Calu3 (cell line): ENCODE measurements at regions of chr2 and their contacts with region 1.

Region 1: GRCh38 chr2:120174963-120175581 is 48.1 kb downstream of the TMEM185B start:
- DNase-seq: peak; percentile 32
- H3K4me3 Mint-ChIP-seq: no peak overlapping the region
- H3K27ac Mint-ChIP-seq: no peak overlapping the region
- H3K4me1 Mint-ChIP-seq: no peaks in the 10 kb centered on the region
- H3K27me3 Mint-ChIP-seq: no peaks in the 10 kb centered on the region
- CTCF ChIP-seq: peak; percentile 60

Region 2: GRCh38 chr2:119641562-119642258 is 533.4 kb before region 1 on chr2:
- CTCF ChIA-PET with region 1: interaction called, 6 read pairs
- intact Hi-C with region 1: loop called (anchors 2 kb)
- DNase-seq: peak; percentile 79
- H3K4me3 Mint-ChIP-seq: no peak overlapping the region
- H3K27ac Mint-ChIP-seq: no peak overlapping the region
- H3K4me1 Mint-ChIP-seq: peaks cover 30% of the 10 kb centered on the region
- H3K27me3 Mint-ChIP-seq: no peaks in the 10 kb centered on the region
- CTCF ChIP-seq: peak; percentile 86

Region 3: DNA sequence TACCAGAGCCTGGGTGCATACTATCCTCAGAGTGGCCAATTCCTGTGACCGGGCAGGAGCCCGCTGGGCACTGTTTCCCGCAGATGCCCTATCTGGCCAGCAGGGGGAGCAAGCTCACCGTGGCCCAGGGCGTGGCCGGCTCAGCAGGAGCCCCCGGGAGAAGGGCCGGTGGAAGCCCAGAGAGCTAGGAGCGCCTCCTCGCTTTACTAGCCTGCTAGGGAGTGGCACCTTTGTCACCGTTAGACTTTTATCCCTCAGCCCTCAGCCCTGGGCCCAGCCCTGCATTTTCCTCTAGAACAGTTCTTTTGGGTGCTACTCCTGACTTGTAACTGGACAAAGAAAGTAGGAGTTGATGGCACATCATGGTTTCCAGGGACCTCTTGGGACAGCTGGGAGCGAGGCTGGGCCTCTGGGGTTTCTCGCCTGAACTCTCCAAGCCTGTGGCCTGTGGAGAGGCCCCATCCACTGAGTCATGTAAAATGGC is 472.1 kb before region 1 on chr2:
- CTCF ChIA-PET with region 1: interaction called, 8 read pairs
- intact Hi-C with region 1: loop called (anchors 1 kb)
- DNase-seq: peak; percentile 83
- H3K4me3 Mint-ChIP-seq: no peak overlapping the region
- H3K27ac Mint-ChIP-seq: no peak overlapping the region
- H3K4me1 Mint-ChIP-seq: no peaks in the 10 kb centered on the region
- H3K27me3 Mint-ChIP-seq: no peaks in the 10 kb centered on the region
- CTCF ChIP-seq: peak; percentile 96

Region 4: GRCh38 chr2:119753041-119753929 is 421.8 kb before region 1 on chr2:
- CTCF ChIA-PET with region 1: no interaction called
- intact Hi-C with region 1: loop called (anchors 2 kb)
- DNase-seq: peak; percentile 54
- H3K4me3 Mint-ChIP-seq: no peak overlapping the region
- H3K27ac Mint-ChIP-seq: no peak overlapping the region
- H3K4me1 Mint-ChIP-seq: peaks cover 19% of the 10 kb centered on the region
- H3K27me3 Mint-ChIP-seq: no peaks in the 10 kb centered on the region
- CTCF ChIP-seq: peak; percentile 54

Region 5: DNA sequence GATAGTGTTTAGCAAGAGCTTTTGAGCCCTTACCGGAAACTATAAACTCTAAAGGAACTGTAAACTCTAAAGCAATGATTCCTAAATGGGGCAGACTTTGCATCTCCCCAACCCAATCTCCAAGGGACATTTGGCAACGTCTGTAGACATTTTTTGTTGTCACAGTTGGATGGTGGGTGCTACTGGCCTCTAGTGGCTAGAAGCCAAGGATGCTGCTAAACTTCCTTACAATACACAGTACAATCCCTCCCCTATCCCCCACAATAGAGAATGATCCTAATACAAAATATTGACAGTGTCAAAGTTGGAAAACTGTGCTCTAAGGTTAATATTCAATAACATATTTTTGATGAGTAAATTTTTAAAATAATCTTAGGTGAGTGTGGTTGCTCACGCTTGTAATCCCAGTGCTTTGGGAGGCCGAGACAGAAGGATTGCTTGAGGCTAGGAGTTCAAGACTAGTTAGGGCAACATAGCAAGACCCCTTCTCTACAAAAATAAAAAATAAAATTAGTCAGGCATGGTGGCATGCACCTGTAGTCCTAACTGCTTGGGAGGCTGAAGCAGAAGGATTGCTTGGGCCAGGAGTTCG is 348.6 kb before region 1 on chr2:
- CTCF ChIA-PET with region 1: interaction called, 4 read pairs
- intact Hi-C with region 1: loop called (anchors 1 kb)
- DNase-seq: peak; percentile 52
- H3K4me3 Mint-ChIP-seq: no peak overlapping the region
- H3K27ac Mint-ChIP-seq: no peak overlapping the region
- H3K4me1 Mint-ChIP-seq: peaks cover 18% of the 10 kb centered on the region
- H3K27me3 Mint-ChIP-seq: no peaks in the 10 kb centered on the region
- CTCF ChIP-seq: peak; percentile 56

Region 6: GRCh38 chr2:119943058-119943457 is 232.0 kb before region 1 on chr2:
- CTCF ChIA-PET with region 1: no interaction called
- intact Hi-C with region 1: loop called (anchors 10 kb)
- DNase-seq: no peak
- H3K4me3 Mint-ChIP-seq: no peak overlapping the region
- H3K27ac Mint-ChIP-seq: no peak overlapping the region
- H3K4me1 Mint-ChIP-seq: no peaks in the 10 kb centered on the region
- H3K27me3 Mint-ChIP-seq: no peaks in the 10 kb centered on the region
- CTCF ChIP-seq: no peak

Region 7: GRCh38 chr2:120012771-120013596 is 162.1 kb before region 1 on chr2 and contains the start of gene EPB41L5:
- CTCF ChIA-PET with region 1: interaction called, 5 read pairs
- intact Hi-C with region 1: loop called (anchors 5 kb)
- DNase-seq: peak; percentile 93
- H3K4me3 Mint-ChIP-seq: peak within 1 kb of the TSS; percentile 84
- H3K27ac Mint-ChIP-seq: peak within 1 kb of the TSS; percentile 91
- H3K4me1 Mint-ChIP-seq: peaks cover 48% of the 10 kb centered on the region
- H3K27me3 Mint-ChIP-seq: no peaks in the 10 kb centered on the region
- CTCF ChIP-seq: no peak
- total RNA-seq, gene EPB41L5: 24.0 and 27.7 TPM in 2 replicates

Region 8: GRCh38 chr2:120134263-120134662 is 40.8 kb before region 1 on chr2:
- CTCF ChIA-PET with region 1: no interaction called
- intact Hi-C with region 1: no loop called
- DNase-seq: peak; percentile 3
- H3K4me3 Mint-ChIP-seq: no peak overlapping the region
- H3K27ac Mint-ChIP-seq: no peak overlapping the region
- H3K4me1 Mint-ChIP-seq: no peaks in the 10 kb centered on the region
- H3K27me3 Mint-ChIP-seq: no peaks in the 10 kb centered on the region
- CTCF ChIP-seq: no peak

Region 9: GRCh38 chr2:120379916-120380893 is 205.1 kb after region 1 on chr2:
- CTCF ChIA-PET with region 1: no interaction called
- intact Hi-C with region 1: no loop called
- DNase-seq: no peak
- H3K4me3 Mint-ChIP-seq: no peak overlapping the region
- H3K27ac Mint-ChIP-seq: no peak overlapping the region
- H3K4me1 Mint-ChIP-seq: no peaks in the 10 kb centered on the region
- H3K27me3 Mint-ChIP-seq: peaks cover 68% of the 10 kb centered on the region
- CTCF ChIP-seq: no peak